Activated CD8-positive, alpha-beta memory T cell treated with anti-CD3 and anti-CD28 coated beads, Interleukin-2, amount 10 ng/mL, durations not matched to agents 7 days and 5 days (primary cell): ENCODE measurements at regions of chr11 and their contacts with region 1.

Region 1: GRCh38 chr11:43895601-43896000 is 15.0 kb downstream of the ALKBH3 start:
- DNase-seq: no peak
- ATAC-seq: no peak
- H3K4me3 Mint-ChIP-seq: no peak overlapping the region
- H3K27ac Mint-ChIP-seq: no peak overlapping the region
- H3K4me1 Mint-ChIP-seq: no peaks in the 10 kb centered on the region
- H3K27me3 Mint-ChIP-seq: no peaks in the 10 kb centered on the region

Region 2: DNA sequence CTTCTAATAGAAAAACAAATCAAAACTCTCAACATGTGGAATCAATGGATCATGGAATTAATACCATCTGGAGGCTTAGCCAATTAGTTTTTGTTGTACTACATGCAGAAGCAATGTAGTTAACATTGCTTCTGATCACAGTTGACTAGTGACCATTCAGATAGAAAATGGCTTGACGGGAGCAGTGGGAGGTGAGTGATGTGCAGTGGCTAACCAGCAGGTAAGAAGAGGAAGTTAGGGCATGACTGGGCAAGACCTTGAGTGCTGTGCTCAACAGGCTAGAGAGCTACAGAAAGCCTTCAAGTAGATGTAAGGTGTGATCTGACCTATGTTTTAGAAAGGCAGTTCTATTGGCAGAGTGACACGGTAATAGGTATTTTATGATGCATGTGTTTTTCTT is 75.7 kb before region 1 on chr11:
- CTCF ChIA-PET with region 1: no interaction called
- DNase-seq: no peak
- ATAC-seq: no peak
- H3K4me3 Mint-ChIP-seq: no peak overlapping the region
- H3K27ac Mint-ChIP-seq: no peak overlapping the region
- H3K4me1 Mint-ChIP-seq: peaks cover 2% of the 10 kb centered on the region
- H3K27me3 Mint-ChIP-seq: no peaks in the 10 kb centered on the region

Region 3: DNA sequence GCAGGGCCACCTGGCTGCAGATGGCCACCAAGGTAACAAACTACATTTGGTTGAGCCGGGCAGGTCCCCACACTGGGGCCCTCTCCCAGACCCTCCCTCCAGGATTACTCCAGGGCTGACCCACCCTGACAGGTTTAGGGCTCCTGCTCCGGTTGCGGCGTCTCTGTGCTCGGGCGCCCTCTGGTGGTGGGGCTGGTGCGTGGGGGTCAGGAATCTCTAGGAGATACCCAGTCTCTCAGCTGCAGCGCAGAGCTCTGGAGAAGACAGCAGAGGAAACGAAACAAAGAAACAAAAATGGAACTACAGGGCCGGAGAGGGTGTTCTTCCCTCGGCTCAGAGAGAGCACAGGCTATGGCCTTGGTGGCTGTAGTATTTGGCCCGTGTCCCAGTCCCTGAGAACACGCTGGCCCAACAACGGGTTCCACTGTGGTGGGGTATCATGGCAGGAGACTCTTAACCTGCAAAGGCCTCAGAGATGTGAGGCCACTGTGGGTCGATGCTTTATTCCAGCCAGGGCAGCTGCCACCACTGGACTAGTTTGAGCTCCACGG is 49.2 kb after region 1 on chr11:
- CTCF ChIA-PET with region 1: interaction called, 23 read pairs
- DNase-seq: peak; percentile 79
- ATAC-seq: peak; percentile 53
- H3K4me3 Mint-ChIP-seq: peak overlapping the region; percentile 49
- H3K27ac Mint-ChIP-seq: no peak overlapping the region
- H3K4me1 Mint-ChIP-seq: peaks cover 17% of the 10 kb centered on the region
- H3K27me3 Mint-ChIP-seq: peaks cover 68% of the 10 kb centered on the region